H1 (cell line): ENCODE measurements at regions of chr4 and their contacts with region 1.

Region 1: DNA sequence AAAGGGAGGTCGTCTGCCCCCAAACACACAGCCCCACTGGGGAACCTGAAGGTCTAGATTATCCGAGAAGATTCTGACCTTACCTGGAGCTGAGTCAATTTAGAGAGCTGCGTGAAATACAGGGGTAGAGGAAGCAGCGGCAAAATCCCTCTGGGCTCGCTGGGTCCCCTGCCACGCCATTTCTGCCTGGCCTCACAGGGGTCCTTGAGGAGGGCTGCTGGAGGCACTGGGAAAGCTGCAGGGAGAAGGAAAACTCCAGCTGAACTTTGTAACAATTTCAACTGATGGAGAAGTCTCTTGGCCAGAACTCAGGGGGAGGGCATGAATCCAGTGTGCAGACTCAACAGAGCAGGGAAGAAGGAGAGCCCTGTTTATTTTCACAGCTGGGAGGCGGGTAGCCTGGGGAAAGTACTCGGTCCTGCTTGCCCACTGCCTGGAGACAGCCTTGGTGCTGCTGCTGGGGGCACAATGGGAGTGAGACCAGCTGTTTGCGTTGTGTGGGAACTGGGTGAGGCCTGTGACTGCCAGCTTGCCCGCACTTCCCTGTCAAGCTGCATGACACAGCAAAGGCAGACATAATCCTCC is 93.2 kb upstream of the MAPK10 start:
- DNase-seq: no peak
- H3K4me3 ChIP-seq: no peak overlapping the region
- H3K27ac ChIP-seq: no peak overlapping the region
- H3K4me1 ChIP-seq: peaks cover 4 to 20% (median 19%) of the 10 kb centered on the region in 4 experiments; a peak in 6 of 7 replicates
- H3K27me3 ChIP-seq: no peaks in the 10 kb centered on the region
- CTCF ChIP-seq: no peak
- EP300 ChIP-seq: no peak
- POLR2A ChIP-seq: no peak
- RAD21 ChIP-seq: no peak

Region 2: GRCh38 chr4:85842540-85842939 is 610.5 kb before region 1 on chr4:
- CTCF ChIA-PET with region 1: no interaction called
- POLR2A ChIA-PET with region 1: no interaction called
- DNase-seq: no peak
- H3K4me3 ChIP-seq: no peak overlapping the region
- H3K27ac ChIP-seq: no peak overlapping the region
- H3K4me1 ChIP-seq: no peaks in the 10 kb centered on the region
- H3K27me3 ChIP-seq: no peaks in the 10 kb centered on the region
- CTCF ChIP-seq: no peak
- EP300 ChIP-seq: no peak
- POLR2A ChIP-seq: no peak
- RAD21 ChIP-seq: no peak

Region 3: DNA sequence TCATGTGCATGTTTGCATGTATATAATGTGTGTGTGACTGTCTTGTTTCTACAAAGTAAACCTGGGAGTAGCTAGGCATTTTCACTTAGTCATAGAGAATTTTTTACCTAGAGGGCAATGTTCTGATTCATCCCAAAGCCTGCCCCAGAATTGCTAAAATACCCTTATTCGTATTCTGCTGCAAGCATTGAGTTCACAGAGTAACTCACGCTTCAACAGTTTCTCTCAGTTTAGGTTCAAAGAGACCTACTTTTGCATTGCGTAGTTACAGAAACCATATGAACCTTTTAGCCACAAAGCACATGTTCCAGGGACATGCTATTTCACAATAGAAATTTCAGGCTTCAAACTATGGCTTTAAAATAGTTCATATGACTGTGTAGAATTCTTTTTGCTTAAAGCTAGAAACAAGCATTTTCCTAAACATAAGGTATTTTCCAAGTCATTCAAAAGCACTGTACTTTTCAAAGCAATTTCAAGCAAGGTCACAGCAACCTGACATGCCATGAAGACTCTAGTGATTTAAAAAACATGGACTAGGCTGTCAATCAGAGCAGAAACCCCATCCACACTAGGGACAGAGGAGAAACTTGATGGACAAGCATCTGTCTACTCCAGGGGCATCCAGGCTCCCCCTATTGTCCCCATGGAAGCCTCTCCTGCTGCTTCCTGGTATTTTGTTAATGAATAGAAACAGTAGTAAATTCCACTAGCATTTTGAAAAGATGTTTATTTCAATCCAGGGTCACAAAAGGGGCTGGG is 11.7 kb before region 1 on chr4:
- CTCF ChIA-PET with region 1: interaction called, 13 read pairs
- POLR2A ChIA-PET with region 1: no interaction called
- DNase-seq: no peak
- H3K4me3 ChIP-seq: peak overlapping the region in 1 of 4 experiments; percentile 27; a peak in 1 of 8 replicates
- H3K27ac ChIP-seq: no peak overlapping the region; the same call in 1 of the 2 replicates
- H3K4me1 ChIP-seq: peaks cover 6 to 11% (median 9%) of the 10 kb centered on the region in 4 experiments; a peak in 4 of 7 replicates
- H3K27me3 ChIP-seq: no peaks in the 10 kb centered on the region
- CTCF ChIP-seq: peak in 2 of 3 experiments; percentile 2 to 26; a peak in 2 of 4 replicates
- EP300 ChIP-seq: no peak
- POLR2A ChIP-seq: no peak
- RAD21 ChIP-seq: peak in 1 of 2 experiments; percentile 4; a peak in 2 of 4 replicates